Lower leg skin (tissue), 4 donors: ENCODE measurements at regions of chr10 and their contacts with region 1.

Region 1: DNA sequence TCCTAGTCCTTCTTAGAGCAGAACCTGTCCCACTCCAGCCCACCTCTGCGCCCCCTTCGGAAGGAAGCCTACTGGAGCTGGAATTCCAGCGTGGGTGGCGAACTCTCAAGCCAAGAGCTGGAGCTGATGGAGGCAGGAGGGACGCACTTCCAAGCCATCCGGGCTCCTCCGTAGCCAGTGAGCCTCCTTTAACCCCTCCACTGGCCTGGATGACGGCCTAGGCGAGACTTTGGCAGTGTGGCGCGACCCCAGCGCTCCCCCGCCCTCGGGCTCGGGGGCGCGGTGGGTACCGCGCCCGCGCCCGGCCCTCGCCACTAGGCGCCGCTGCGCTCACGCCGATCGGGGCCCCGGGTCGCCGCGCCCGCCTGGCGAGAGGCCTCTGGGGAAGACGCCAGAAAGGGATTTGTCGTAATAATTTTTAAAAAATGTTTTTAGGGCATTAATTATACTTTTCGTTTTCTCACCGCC is 5.1 kb upstream of the EMX2 start:
- DNase-seq: peak; percentile 19 to 86
- H3K4me3 ChIP-seq: no peak overlapping the region
- CTCF ChIP-seq: no peak
- POLR2A ChIP-seq: no peak

Region 2: DNA sequence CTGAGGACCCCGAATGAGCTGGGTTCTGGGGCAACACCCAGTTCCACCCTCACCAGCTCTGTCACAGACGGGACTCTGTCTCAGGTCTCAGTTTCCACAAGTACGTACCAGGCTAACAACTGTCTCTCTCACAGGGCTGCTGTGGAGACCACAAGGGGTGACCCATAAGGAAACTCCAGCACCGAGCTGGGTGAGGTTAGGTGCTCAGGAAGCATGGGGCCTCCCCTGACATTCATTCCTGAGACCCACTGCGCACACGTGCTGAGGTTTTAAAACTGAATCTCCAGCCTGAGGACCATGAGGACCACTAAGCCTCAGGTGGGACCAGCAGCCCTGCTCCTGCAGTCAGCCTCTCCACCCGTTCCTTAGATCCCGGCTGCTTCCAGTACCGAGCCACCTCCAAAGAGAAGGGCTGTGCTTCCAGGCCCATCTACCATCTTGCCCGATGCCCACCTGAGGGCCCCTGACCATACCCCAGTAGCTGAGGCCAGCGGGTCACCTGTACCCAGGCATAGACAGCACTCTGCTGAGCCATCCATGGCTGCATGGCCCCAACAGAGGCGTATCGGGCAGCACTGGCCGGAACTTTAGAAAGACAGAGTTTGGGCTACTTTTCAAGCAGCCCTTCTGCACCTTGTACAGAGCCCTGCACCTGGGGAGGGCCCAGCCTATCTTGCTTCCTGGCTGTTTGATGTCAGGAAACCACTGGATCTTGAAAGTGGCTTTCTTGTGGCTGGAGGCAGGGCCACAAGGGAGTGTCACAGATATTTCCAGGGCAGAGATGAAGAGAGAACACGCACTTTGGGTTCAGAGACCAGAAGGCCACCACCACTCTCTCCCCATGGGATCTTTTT is 813.8 kb before region 1 on chr10:
- intact Hi-C with region 1: no loop called
- DNase-seq: no peak
- H3K4me3 ChIP-seq: no peak overlapping the region
- CTCF ChIP-seq: no peak
- POLR2A ChIP-seq: no peak

Region 3: DNA sequence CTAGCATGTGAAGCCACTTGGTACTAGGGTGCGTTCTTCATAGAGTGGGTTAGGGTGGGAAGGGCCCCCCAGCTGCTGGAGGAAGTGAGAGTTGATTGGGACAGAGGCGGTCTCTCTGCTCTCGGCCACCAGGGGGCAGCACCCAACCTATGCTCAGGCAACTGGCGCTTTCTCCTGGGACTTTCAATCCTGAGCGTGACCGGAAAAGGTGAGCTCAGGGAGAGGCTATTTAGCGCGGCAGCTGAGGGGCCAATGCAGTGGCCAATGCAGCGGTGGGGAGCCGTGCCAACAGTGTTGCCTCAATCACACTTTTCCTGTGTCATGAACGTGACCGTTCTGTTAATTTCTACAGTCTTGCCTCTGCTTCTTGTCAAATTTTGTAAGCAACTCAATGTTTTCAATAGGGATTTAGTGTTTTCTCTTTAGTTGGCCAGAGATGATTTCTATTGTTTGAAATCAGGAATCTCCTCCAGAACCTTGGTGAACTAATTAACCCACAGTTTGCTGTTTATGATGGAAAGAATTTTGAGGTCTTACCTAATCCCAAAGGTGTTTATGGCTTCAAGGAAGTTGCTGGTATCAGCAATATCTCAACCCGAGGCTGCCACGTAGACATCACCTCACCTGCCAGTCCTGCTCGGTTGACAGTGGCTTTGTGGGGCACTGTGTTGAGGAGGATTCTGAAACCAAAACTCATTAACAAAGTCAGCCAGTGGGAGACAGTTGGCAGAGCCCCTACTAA is 94.4 kb before region 1 on chr10:
- intact Hi-C with region 1: loop called (anchors 10 kb)
- DNase-seq: peak; percentile 92 to 98
- H3K4me3 ChIP-seq: no peak overlapping the region
- CTCF ChIP-seq: peak in 1 of 3 donors; percentile 92
- POLR2A ChIP-seq: no peak

Region 4: DNA sequence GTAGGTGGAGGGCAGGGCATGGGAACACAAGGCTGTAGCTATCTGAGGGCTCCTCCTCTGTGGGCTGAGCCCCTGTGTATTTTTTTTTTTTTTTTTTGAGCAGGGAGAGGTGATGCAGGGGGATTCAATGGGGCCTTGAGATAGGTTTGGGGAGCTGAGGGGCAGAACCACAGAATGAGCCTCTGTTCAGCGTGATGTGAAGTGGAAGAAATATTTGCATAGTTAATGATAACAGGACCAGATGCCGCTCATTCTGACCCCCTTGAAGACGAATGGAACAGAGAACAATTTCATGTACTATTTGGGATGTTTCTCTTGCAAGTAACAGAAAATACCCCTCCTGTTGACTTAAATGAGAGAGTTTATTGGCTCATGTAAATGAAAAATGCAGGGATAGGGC is 64.6 kb before region 1 on chr10:
- intact Hi-C with region 1: no loop called
- DNase-seq: no peak
- H3K4me3 ChIP-seq: no peak overlapping the region
- CTCF ChIP-seq: no peak
- POLR2A ChIP-seq: no peak

Region 5: GRCh38 chr10:117757086-117757720 is 219.7 kb after region 1 on chr10:
- intact Hi-C with region 1: loop called (anchors 10 kb)
- DNase-seq: no peak
- H3K4me3 ChIP-seq: no peak overlapping the region
- CTCF ChIP-seq: no peak
- POLR2A ChIP-seq: no peak

Region 6: GRCh38 chr10:118241229-118242137 is 704.0 kb after region 1 on chr10:
- intact Hi-C with region 1: loop called (anchors 5 kb)
- DNase-seq: peak; percentile 85 to 97
- H3K4me3 ChIP-seq: no peak overlapping the region
- CTCF ChIP-seq: peak in 1 of 3 donors; percentile 86
- POLR2A ChIP-seq: no peak